Adrenal gland (tissue), 19 donors: ENCODE measurements at regions of chr20 and their contacts with region 1.

Region 1: GRCh38 chr20:63864847-63865640 is at the start of gene TPD52L2:
- DNase-seq: peak; percentile 98 to 100 (median 99)
- H3K4me3 ChIP-seq: peak within 1 kb of the TSS; percentile 31 to 91 (median 78)
- H3K27ac ChIP-seq: peak within 1 kb of the TSS; percentile 90 to 98 (median 96)
- H3K4me1 ChIP-seq: peaks cover 4 to 22% of the 10 kb centered on the region in 2 donors
- H3K27me3 ChIP-seq: no peaks in the 10 kb centered on the region
- CTCF ChIP-seq: no peak
- POLR2A ChIP-seq: peak; percentile 89 to 95
- total RNA-seq, gene TPD52L2: 81.9 to 125 (median 112) TPM

Region 2: GRCh38 chr20:63782051-63782471 is 83.0 kb before region 1 on chr20:
- intact Hi-C with region 1: loop called in 1 of 2 experiments (anchors 5 kb)
- DNase-seq: no peak
- H3K4me3 ChIP-seq: no peak overlapping the region
- H3K27ac ChIP-seq: no peak overlapping the region
- H3K4me1 ChIP-seq: no peaks in the 10 kb centered on the region
- H3K27me3 ChIP-seq: no peaks in the 10 kb centered on the region
- CTCF ChIP-seq: no peak
- POLR2A ChIP-seq: no peak

Region 3: GRCh38 chr20:64279826-64280459 is 414.9 kb after region 1 on chr20:
- intact Hi-C with region 1: no loop called
- DNase-seq: no peak
- H3K4me3 ChIP-seq: no peak overlapping the region
- H3K27ac ChIP-seq: no peak overlapping the region
- H3K4me1 ChIP-seq: no peaks in the 10 kb centered on the region
- H3K27me3 ChIP-seq: no peaks in the 10 kb centered on the region
- CTCF ChIP-seq: no peak
- POLR2A ChIP-seq: no peak